CD4-positive, alpha-beta memory T cell (primary cell): ENCODE measurements at regions of chr2 and their contacts with region 1.

Region 1: DNA sequence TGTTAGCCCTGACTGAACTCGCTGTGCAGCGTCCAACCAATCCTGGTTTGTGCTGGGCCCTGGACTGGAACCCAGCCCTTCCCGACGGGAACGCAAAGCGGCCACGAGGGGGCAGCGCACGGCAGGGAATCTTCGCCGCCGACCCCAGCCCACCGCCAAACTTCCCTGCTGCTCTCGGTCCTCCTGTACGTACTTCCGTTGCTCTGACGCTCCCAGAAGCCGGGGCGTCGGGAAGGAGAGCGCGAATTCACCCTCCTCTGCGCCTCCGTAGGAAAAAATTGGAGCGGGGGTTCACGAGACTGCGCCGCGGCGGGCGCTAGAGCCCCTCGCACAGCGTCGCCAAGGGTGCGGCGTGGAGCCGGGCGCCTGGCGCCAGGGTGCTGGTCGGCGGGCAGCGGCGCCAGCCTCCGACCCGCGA is 948 bp upstream of the SH3RF3 start:
- DNase-seq: peak; percentile 32 to 56 (median 54)
- H3K4me3 ChIP-seq: peak overlapping the region; percentile 11 to 63
- H3K4me3 Mint-ChIP-seq: peak overlapping the region; percentile 71 to 85 (median 80)
- H3K27ac ChIP-seq: no peak overlapping the region
- H3K27ac Mint-ChIP-seq: peak overlapping the region in 1 of 7 donors; percentile 12
- H3K4me1 ChIP-seq: peaks cover 15% of the 10 kb centered on the region
- H3K4me1 Mint-ChIP-seq: peaks cover 6 to 14% (median 10%) of the 10 kb centered on the region in 4 donors
- H3K27me3 ChIP-seq: peaks cover 5% of the 10 kb centered on the region
- H3K27me3 Mint-ChIP-seq: peaks cover 20 to 39% of the 10 kb centered on the region in 2 donors

Region 2: GRCh38 chr2:108855194-108855593 is 272.9 kb before region 1 on chr2:
- CTCF ChIA-PET with region 1: interaction called, 3 read pairs
- POLR2A ChIA-PET with region 1: no interaction called
- intact Hi-C with region 1: loop called (anchors 1 kb)
- DNase-seq: peak in 4 of 5 donors; percentile 26 to 38 (median 34)
- H3K4me3 ChIP-seq: no peak overlapping the region
- H3K4me3 Mint-ChIP-seq: no peak overlapping the region
- H3K27ac ChIP-seq: no peak overlapping the region
- H3K27ac Mint-ChIP-seq: peak overlapping the region in 1 of 7 donors; percentile 13
- H3K4me1 ChIP-seq: no peaks in the 10 kb centered on the region
- H3K4me1 Mint-ChIP-seq: peaks cover 0 to 2% (median 0%) of the 10 kb centered on the region in 4 donors
- H3K27me3 ChIP-seq: no peaks in the 10 kb centered on the region
- H3K27me3 Mint-ChIP-seq: no peaks in the 10 kb centered on the region

Region 3: DNA sequence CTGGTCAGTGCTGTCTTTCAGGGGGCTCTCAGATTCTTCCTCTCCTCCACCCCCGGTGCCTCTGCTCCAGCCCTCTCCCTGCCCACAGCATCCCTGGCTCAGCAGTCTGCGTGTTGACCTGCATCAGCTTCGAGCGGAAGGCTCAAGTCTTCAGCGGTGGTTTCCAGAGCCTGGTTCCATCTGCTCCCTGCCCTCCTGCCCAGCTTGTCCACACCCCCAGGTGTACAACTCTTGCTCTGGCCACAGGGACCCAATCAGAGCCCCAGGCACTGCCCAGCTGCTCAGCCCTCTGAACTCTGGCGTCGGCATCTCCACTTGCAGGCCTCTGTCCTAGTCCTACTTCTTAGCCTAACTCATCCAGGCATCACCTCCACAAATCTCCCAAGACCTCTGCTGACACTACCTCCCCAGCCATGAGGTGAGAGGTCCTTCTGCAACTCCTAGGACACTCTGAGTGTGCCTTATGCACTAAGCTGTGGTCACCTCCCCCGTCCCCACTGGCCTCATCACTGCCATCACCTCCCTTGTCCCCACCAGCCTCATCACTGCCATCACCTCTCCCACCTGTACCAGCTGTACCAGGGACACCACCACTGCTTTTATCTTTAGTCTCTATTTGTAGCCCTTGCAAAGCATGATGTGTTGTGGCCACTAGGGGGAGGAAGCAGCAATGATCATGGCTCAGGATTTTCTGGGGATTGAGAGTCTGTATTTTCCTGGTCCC is 200.0 kb before region 1 on chr2:
- CTCF ChIA-PET with region 1: interaction called, 4 read pairs
- POLR2A ChIA-PET with region 1: no interaction called
- intact Hi-C with region 1: loop called (anchors 2 kb)
- DNase-seq: peak in 4 of 5 donors; percentile 41 to 52 (median 46)
- H3K4me3 ChIP-seq: no peak overlapping the region
- H3K4me3 Mint-ChIP-seq: no peak overlapping the region
- H3K27ac ChIP-seq: no peak overlapping the region
- H3K27ac Mint-ChIP-seq: peak overlapping the region in 1 of 7 donors; percentile 2
- H3K4me1 ChIP-seq: peaks cover 7% of the 10 kb centered on the region
- H3K4me1 Mint-ChIP-seq: peaks cover 4 to 14% (median 7%) of the 10 kb centered on the region in 4 donors
- H3K27me3 ChIP-seq: no peaks in the 10 kb centered on the region
- H3K27me3 Mint-ChIP-seq: no peaks in the 10 kb centered on the region

Region 4: DNA sequence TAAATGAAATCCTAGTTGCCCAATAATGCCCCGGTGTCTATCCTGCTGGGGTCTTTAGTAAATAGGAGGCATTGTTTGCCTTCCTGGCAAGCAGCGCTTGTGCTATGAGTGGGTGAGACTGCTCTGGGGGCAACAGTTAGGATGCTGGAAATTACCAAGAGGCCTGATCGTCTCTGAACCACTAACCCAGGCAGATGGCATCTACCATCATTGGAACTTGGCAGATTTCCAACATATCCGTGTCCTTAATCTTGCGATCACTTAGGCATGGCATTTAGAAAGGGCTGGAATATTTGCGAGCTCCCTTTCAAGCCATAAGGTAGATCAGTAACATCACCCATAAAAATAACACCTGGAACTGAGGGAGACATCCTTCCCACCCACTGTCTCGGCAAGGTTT is 17.9 kb before region 1 on chr2:
- CTCF ChIA-PET with region 1: no interaction called
- POLR2A ChIA-PET with region 1: no interaction called
- intact Hi-C with region 1: no loop called
- DNase-seq: no peak
- H3K4me3 ChIP-seq: no peak overlapping the region
- H3K4me3 Mint-ChIP-seq: no peak overlapping the region
- H3K27ac ChIP-seq: no peak overlapping the region
- H3K27ac Mint-ChIP-seq: no peak overlapping the region
- H3K4me1 ChIP-seq: no peaks in the 10 kb centered on the region
- H3K4me1 Mint-ChIP-seq: no peaks in the 10 kb centered on the region
- H3K27me3 ChIP-seq: no peaks in the 10 kb centered on the region
- H3K27me3 Mint-ChIP-seq: peaks cover 0 to 1% of the 10 kb centered on the region in 2 donors

Region 5: GRCh38 chr2:109143214-109144187 is 15.4 kb after region 1 on chr2:
- CTCF ChIA-PET with region 1: interaction called, 3 read pairs
- POLR2A ChIA-PET with region 1: no interaction called
- intact Hi-C with region 1: loop called (anchors 2 kb)
- DNase-seq: peak; percentile 73 to 87 (median 77)
- H3K4me3 ChIP-seq: peak overlapping the region in 1 of 2 donors; percentile 16
- H3K4me3 Mint-ChIP-seq: peak overlapping the region; percentile 29 to 85 (median 64)
- H3K27ac ChIP-seq: no peak overlapping the region
- H3K27ac Mint-ChIP-seq: peak overlapping the region; percentile 45 to 90 (median 75)
- H3K4me1 ChIP-seq: peaks cover 24% of the 10 kb centered on the region
- H3K4me1 Mint-ChIP-seq: peaks cover 10 to 35% (median 25%) of the 10 kb centered on the region in 4 donors
- H3K27me3 ChIP-seq: peaks cover 3% of the 10 kb centered on the region
- H3K27me3 Mint-ChIP-seq: peaks cover 19 to 21% of the 10 kb centered on the region in 2 donors

Region 6: GRCh38 chr2:109317471-109318095 is 189.5 kb after region 1 on chr2:
- CTCF ChIA-PET with region 1: no interaction called
- POLR2A ChIA-PET with region 1: no interaction called
- intact Hi-C with region 1: no loop called
- DNase-seq: no peak
- H3K4me3 ChIP-seq: no peak overlapping the region
- H3K4me3 Mint-ChIP-seq: no peak overlapping the region
- H3K27ac ChIP-seq: no peak overlapping the region
- H3K27ac Mint-ChIP-seq: no peak overlapping the region
- H3K4me1 ChIP-seq: peaks cover 12% of the 10 kb centered on the region
- H3K4me1 Mint-ChIP-seq: peaks cover 4 to 19% (median 11%) of the 10 kb centered on the region in 4 donors
- H3K27me3 ChIP-seq: no peaks in the 10 kb centered on the region
- H3K27me3 Mint-ChIP-seq: peaks cover 6 to 14% of the 10 kb centered on the region in 2 donors